Right ventricle myocardium superior (tissue), 1 donor: ENCODE measurements at regions of chr1 and their contacts with region 1.

Region 1: DNA sequence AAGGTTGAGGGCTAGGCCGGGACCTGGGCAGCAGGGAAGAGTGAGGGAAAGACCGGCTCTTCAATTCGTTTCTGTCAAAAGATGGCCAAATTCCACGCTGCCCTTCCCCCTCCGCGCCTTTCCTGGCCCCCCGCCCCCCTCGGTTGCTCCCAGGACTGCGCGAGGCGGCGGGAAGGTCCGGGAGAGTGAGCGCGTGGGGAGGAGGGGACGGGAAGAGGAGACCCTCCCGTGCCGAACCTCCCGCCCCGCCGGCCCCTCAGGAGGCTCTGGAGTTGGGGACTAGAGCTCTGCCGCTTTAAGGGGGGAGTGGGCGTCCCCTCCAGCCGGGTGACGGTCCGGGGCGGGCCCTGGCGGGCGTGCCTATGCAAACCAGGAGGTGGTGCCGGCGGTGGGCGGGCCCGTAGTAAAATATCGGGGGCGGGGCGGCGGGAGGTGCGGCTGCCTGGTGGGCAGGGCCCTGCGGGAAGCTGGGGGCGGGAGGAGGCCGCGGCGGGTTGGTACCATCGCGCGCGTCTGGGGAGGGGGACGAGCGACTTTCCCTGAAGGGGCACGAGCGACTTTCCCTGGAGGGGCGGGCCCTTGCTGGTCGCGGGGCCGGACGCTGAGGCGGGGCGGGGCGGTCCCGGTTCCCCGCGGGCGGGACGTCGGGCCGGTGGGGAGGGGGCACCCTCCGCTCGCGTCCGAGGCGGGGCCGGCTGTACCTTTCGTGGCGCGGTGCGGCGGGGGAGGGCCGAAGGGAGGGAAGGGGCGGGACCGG is 58.2 kb downstream of the BCL9 start:
- DNase-seq: peak; percentile 99
- ATAC-seq: peak; percentile 96

Region 2: GRCh38 chr1:147504801-147505311 is 94.7 kb before region 1 on chr1:
- intact Hi-C with region 1: no loop called
- DNase-seq: no peak
- ATAC-seq: peak; percentile 66

Region 3: GRCh38 chr1:147541672-147542568 is 57.6 kb before region 1 on chr1:
- intact Hi-C with region 1: loop called (anchors 5 kb)
- DNase-seq: peak; percentile 66
- ATAC-seq: peak; percentile 64